ENCODE measurements at regions of chr1 and their contacts with region 1.

Region 1: GRCh38 chr1:39152923-39153322 is 51.6 kb upstream of the MACF1 start:
- DNase-seq: no peak
- H3K4me3 ChIP-seq: no peak overlapping the region
- H3K27ac ChIP-seq: no peak overlapping the region
- H3K4me1 ChIP-seq: peaks cover 58% of the 10 kb centered on the region
- H3K27me3 ChIP-seq: no peaks in the 10 kb centered on the region
- CTCF ChIP-seq: no peak

Region 2: GRCh38 chr1:38990738-38991639 is 161.9 kb before region 1 on chr1 and contains the start of gene AKIRIN1:
- CTCF ChIA-PET with region 1: no interaction called
- POLR2A ChIA-PET with region 1: no interaction called
- intact Hi-C with region 1: no loop called
- DNase-seq: peak; percentile 86 to 100
- H3K4me3 ChIP-seq: peak within 1 kb of the TSS; percentile 90
- H3K27ac ChIP-seq: peak within 1 kb of the TSS; percentile 33; the same call in 1 of the 2 replicates
- H3K4me1 ChIP-seq: peaks cover 37% of the 10 kb centered on the region
- H3K27me3 ChIP-seq: no peaks in the 10 kb centered on the region
- CTCF ChIP-seq: 0 out of 2 replicates have a peak, but pooled peaks have one; percentile 21
- total RNA-seq, gene AKIRIN1: 76.9 and 80.0 TPM in 2 replicates

Region 3: GRCh38 chr1:39016604-39017171 is 136.2 kb before region 1 on chr1:
- CTCF ChIA-PET with region 1: no interaction called
- POLR2A ChIA-PET with region 1: interaction called, 10 read pairs
- intact Hi-C with region 1: no loop called
- DNase-seq: no peak
- H3K4me3 ChIP-seq: no peak overlapping the region
- H3K27ac ChIP-seq: no peak overlapping the region
- H3K4me1 ChIP-seq: 0 out of 2 replicates have a peak, but pooled peaks cover 5% of the 10 kb centered on the region
- H3K27me3 ChIP-seq: no peaks in the 10 kb centered on the region
- CTCF ChIP-seq: no peak

Region 4: DNA sequence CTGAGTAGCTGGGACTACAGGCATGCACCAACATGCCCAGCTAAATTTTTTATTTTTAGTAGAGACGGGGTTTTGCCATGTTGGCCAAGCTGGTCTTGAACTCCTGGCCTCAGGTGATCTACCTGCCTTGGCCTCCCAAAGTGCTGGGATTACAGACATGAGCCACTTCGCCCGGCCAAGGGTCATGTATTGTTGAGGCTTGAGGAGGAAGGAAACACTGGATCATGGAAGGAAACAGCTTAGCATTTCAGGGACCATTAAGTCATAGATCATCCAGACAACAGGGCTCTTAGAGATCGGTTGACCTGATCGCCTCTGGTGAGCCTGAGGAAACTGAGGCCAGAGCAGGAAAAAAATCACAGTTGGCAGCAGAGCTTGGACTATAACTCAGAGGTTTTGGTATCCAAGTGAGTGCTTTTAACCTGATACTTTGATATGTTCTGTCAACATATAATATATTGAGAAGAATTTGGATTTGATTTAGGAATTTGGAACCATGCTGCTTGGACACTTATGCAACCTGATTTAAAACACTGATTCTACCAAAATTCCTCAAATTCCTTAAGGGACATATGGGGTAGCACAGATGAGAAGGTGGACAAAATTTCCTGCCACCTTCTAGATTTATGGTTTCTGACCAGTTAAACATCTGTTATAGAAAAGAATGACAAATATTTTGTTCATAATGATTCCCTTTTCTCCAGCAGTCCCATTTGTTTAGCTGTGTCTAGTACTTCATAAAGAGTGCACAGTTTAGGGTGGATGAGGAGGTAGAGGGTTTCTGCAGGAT is 325.4 kb after region 1 on chr1:
- CTCF ChIA-PET with region 1: no interaction called
- POLR2A ChIA-PET with region 1: no interaction called
- intact Hi-C with region 1: no loop called
- DNase-seq: no peak
- H3K4me3 ChIP-seq: no peak overlapping the region
- H3K27ac ChIP-seq: no peak overlapping the region
- H3K4me1 ChIP-seq: no peaks in the 10 kb centered on the region
- H3K27me3 ChIP-seq: no peaks in the 10 kb centered on the region
- CTCF ChIP-seq: no peak

Region 5: GRCh38 chr1:39491146-39491921 is 338.4 kb after region 1 on chr1 and contains the start of gene BMP8A:
- CTCF ChIA-PET with region 1: no interaction called
- POLR2A ChIA-PET with region 1: no interaction called
- intact Hi-C with region 1: no loop called
- DNase-seq: peak in 1 of 2 experiments; percentile 83
- H3K4me3 ChIP-seq: peak within 1 kb of the TSS; percentile 38; the same call in 1 of the 2 replicates
- H3K27ac ChIP-seq: no peak within 1 kb of the TSS
- H3K4me1 ChIP-seq: no peaks in the 10 kb centered on the region
- H3K27me3 ChIP-seq: no peaks in the 10 kb centered on the region
- CTCF ChIP-seq: no peak
- total RNA-seq, gene BMP8A: 0.31 TPM in 1 of 2 replicates, not detected in the other

Measured in PC-9 (cell line).